Naive thymus-derived CD4-positive, alpha-beta T cell (primary cell): ENCODE measurements at regions of chr1 and their contacts with region 1.

Region 1: DNA sequence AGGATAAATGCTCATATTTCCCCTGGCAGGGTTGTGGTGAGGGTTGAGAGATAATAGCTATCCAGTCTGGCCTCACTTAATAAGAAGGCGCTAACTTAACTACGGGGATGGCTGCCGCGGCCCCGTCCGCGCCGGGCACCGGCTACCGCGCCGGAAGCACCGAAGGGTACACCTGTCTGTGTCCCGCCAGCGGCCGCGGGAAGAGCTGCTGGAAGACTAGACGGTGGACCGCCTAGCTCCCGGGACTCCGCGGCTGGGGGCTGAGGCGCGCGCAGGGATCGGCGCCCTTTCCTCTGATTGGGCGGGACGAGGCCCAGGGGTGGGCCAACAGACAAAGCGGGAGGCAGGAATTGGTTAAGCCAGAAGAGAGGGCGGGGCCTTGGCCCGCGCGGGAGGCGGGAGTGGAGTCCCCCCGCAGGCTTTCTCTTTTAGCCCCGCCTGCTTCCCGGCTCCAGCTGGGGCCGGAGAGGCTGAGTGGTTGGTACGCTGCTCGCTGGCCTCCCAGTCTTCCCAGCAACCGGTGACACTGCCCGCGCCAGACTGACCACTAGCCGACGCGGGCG is at the start of gene ZNF672:
- DNase-seq: peak; percentile 86 to 94 (median 92)
- ATAC-seq: peak; percentile 90
- H3K4me3 ChIP-seq: peak within 1 kb of the TSS; percentile 78
- H3K4me3 Mint-ChIP-seq: peak within 1 kb of the TSS in 2 of 10 donors; percentile 93 to 96
- H3K27ac ChIP-seq: peak within 1 kb of the TSS; percentile 94
- H3K27ac Mint-ChIP-seq: peak within 1 kb of the TSS in 6 of 9 donors; percentile 95 to 99 (median 98)
- H3K4me1 ChIP-seq: peaks cover 13 to 15% of the 10 kb centered on the region in 2 donors
- H3K4me1 Mint-ChIP-seq: peaks cover 19 to 38% (median 31%) of the 10 kb centered on the region in 7 donors
- H3K27me3 ChIP-seq: no peaks in the 10 kb centered on the region
- H3K27me3 Mint-ChIP-seq: peaks cover 0 to 8% (median 0%) of the 10 kb centered on the region in 5 donors
- total RNA-seq, gene ZNF672: 28.7 to 49.8 (median 42.7) TPM

Region 2: DNA sequence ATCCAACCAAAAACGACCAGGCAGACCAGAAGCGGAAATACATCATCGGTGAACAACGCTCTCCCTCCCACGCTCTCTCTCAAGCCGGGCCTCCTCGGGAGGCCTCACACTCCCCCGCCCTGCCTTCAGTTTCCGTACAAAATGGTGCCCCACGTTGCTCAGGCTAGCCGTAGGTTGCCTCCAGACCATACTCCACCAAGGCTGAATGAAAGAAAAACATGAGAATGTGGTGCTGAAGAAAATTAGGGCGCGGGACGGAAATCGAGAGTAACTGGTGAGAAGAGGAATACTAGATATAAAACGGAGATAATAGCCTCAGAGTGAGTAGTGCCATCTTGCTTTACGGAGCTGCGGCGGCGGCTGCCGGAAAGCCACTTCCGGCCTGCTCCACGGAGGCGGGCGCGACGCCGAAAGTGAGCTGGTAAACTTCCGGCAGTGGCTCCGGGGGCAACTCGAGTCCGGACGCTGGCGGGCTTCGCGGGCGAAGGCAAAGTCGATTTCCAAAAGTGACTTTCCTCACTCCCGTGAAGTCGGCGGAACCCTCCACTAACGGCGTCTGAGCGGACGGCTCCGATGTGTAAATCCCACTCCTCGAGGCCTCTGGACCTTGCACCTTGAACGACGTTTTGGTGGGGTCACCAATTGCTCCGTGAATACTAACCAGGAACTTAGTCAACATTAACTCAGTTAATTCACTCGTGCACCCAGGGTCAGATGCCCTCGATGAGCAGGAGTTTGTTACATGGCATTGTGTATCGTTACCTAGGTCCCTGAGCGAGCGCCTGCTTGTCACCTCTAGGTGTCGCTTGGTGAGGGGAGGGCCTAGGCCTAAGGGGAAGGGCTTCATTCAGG is 11.7 kb before region 1 on chr1 and contains the start of gene SH3BP5L:
- CTCF ChIA-PET with region 1: interaction called, 7 read pairs
- POLR2A ChIA-PET with region 1: interaction called, 121 read pairs
- intact Hi-C with region 1: loop called (anchors 1 kb)
- DNase-seq: peak; percentile 78 to 96 (median 95)
- ATAC-seq: peak; percentile 92
- H3K4me3 ChIP-seq: peak within 1 kb of the TSS; percentile 89
- H3K4me3 Mint-ChIP-seq: peak within 1 kb of the TSS; percentile 92 to 99 (median 98)
- H3K27ac ChIP-seq: peak within 1 kb of the TSS; percentile 96
- H3K27ac Mint-ChIP-seq: peak within 1 kb of the TSS; percentile 95 to 100 (median 99)
- H3K4me1 ChIP-seq: peaks cover 37 to 47% of the 10 kb centered on the region in 2 donors
- H3K4me1 Mint-ChIP-seq: peaks cover 43 to 67% (median 52%) of the 10 kb centered on the region in 7 donors
- H3K27me3 ChIP-seq: no peaks in the 10 kb centered on the region
- H3K27me3 Mint-ChIP-seq: peaks cover 0 to 2% (median 0%) of the 10 kb centered on the region in 5 donors
- total RNA-seq, gene SH3BP5L: 22.5 to 51.1 (median 33.3) TPM

Region 3: DNA sequence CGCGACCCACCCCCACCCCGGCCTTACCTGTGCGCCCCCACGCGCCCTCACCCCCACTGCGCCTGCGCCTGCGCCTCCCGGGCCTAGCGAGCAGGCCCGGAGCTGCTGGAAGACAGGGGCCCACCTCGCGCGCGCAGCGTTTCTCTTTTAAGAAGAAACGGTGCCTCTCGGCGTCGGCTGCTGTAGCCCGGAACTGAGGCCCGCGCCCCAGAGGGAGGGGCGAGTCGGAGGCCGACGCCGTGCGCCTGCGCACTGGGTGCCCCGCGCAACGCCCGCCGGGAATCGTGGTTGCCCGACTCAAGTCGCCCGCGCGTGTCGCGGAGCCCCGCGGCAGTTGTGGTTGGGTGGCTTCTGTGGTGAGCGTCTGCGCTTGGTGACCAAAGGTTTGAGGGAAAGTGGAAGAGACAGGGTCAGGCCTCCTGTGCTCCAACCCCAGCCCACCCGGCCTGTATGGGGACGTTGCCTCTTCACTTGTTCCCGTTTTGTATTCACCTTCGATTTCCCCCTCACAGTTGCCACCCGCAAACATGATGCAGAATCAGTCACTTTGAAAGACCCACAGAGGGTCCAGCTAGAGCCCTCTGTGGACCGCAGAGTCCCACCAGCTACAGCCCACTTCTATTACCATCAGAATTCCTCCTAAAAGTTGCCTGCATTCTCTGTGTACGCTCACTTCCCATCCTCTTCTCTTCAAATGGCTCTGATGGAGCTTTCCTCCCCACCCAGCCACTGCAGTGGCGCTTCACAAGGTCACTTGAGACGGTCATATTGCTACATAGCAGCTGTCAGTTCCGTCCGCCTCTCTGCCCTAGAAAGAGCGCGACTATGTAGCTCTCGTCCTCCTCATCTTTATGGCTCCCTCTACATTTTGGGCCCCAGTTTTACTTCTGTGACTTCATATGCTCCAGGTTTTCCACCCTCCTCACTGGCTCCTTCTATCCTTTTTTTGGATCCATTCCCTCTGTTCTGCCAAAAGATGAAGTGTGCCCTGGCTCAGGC is 21.3 kb after region 1 on chr1 and contains the start of gene ZNF692:
- CTCF ChIA-PET with region 1: interaction called, 10 read pairs
- POLR2A ChIA-PET with region 1: interaction called, 154 read pairs
- intact Hi-C with region 1: loop called (anchors 1 kb)
- DNase-seq: peak; percentile 96 to 98 (median 97)
- ATAC-seq: peak; percentile 93
- H3K4me3 ChIP-seq: peak within 1 kb of the TSS; percentile 78
- H3K4me3 Mint-ChIP-seq: peak within 1 kb of the TSS; percentile 81 to 98 (median 91)
- H3K27ac ChIP-seq: peak within 1 kb of the TSS; percentile 81
- H3K27ac Mint-ChIP-seq: peak within 1 kb of the TSS; percentile 90 to 98 (median 96)
- H3K4me1 ChIP-seq: peaks cover 39 to 50% of the 10 kb centered on the region in 2 donors
- H3K4me1 Mint-ChIP-seq: peaks cover 23 to 60% (median 51%) of the 10 kb centered on the region in 7 donors
- H3K27me3 ChIP-seq: no peaks in the 10 kb centered on the region
- H3K27me3 Mint-ChIP-seq: no peaks in the 10 kb centered on the region
- total RNA-seq, gene ZNF692: 44.5 to 87.5 (median 68.0) TPM

Region 4: GRCh38 chr1:248873409-248873992 is 35.6 kb after region 1 on chr1:
- CTCF ChIA-PET with region 1: interaction called, 3 read pairs
- POLR2A ChIA-PET with region 1: interaction called, 28 read pairs
- intact Hi-C with region 1: loop called (anchors 1 kb)
- DNase-seq: peak; percentile 80 to 99 (median 91)
- ATAC-seq: peak; percentile 84
- H3K4me3 ChIP-seq: peak overlapping the region; percentile 86
- H3K4me3 Mint-ChIP-seq: peak overlapping the region; percentile 85 to 100 (median 97)
- H3K27ac ChIP-seq: peak overlapping the region; percentile 76
- H3K27ac Mint-ChIP-seq: peak overlapping the region; percentile 91 to 100 (median 99)
- H3K4me1 ChIP-seq: no peaks in the 10 kb centered on the region
- H3K4me1 Mint-ChIP-seq: peaks cover 8 to 31% (median 23%) of the 10 kb centered on the region in 7 donors
- H3K27me3 ChIP-seq: no peaks in the 10 kb centered on the region
- H3K27me3 Mint-ChIP-seq: peaks cover 0 to 26% (median 0%) of the 10 kb centered on the region in 5 donors